Heart right ventricle (tissue), 16 donors: ENCODE measurements at regions of chr9 and their contacts with region 1.

Region 1: DNA sequence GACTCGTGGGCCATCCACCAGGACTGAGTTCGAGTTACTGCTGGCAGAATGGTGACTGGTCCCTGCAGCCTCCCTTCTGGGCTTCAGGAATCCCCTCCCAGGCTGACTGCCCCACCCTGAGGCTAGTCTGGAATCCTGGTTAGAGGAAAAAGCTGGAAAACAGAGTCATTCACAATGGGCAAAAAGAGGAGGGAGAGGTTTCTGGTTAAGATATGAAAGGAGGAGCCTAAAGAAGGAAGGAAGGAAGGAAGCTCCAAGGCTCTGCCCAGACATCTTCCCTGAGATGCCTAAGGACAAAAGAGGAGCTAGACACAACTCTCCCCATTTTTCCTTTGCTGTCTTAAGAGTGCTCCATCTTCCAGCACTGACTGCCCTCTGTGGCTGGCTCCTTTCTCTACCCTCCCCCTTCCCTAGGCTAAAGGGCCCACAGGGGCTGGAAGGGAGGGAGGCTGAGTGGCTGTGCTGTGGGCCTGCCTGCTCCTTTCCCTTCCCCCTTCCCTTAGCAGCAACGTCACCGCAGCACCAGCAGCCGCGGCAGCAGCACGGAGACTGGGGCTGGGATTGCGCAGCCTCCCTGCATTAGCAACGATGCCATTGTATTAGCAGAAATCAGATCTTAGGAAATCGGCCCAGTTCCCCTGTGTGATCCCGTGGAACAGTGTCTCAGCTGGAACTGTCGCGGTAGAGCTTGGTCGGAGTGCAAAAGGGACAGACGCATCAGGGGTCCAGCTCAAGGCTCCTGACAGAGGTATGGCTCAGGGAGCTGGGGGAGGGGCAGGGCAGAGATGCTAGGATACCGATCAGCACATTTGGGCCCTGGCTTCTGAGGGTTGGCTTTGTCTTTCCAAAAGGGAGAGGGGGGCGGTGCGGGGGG is 48.7 kb downstream of the RUSC2 start:
- DNase-seq: peak; percentile 76 to 78
- ATAC-seq: peak; percentile 83 to 92 (median 89)
- H3K4me3 ChIP-seq: peak overlapping the region; percentile 11 to 66 (median 50)
- H3K27ac ChIP-seq: peak overlapping the region; percentile 84 to 97 (median 89)
- H3K4me1 ChIP-seq: peaks cover 11 to 75% (median 53%) of the 10 kb centered on the region in 9 donors
- H3K27me3 ChIP-seq: no peaks in the 10 kb centered on the region
- CTCF ChIP-seq: no peak

Region 2: GRCh38 chr9:35510745-35511428 is 27.7 kb before region 1 on chr9:
- intact Hi-C with region 1: loop called in 3 of 10 experiments (anchors 2 to 5 kb)
- DNase-seq: peak; percentile 81 to 93
- ATAC-seq: peak; percentile 86 to 96 (median 95)
- H3K4me3 ChIP-seq: peak overlapping the region in 3 of 10 donors; percentile 2 to 32 (median 6)
- H3K27ac ChIP-seq: peak overlapping the region; percentile 68 to 91 (median 82)
- H3K4me1 ChIP-seq: peaks cover 3 to 78% (median 34%) of the 10 kb centered on the region in 9 donors
- H3K27me3 ChIP-seq: no peaks in the 10 kb centered on the region
- CTCF ChIP-seq: peak in 8 of 9 donors; percentile 17 to 68 (median 41)

Region 3: DNA sequence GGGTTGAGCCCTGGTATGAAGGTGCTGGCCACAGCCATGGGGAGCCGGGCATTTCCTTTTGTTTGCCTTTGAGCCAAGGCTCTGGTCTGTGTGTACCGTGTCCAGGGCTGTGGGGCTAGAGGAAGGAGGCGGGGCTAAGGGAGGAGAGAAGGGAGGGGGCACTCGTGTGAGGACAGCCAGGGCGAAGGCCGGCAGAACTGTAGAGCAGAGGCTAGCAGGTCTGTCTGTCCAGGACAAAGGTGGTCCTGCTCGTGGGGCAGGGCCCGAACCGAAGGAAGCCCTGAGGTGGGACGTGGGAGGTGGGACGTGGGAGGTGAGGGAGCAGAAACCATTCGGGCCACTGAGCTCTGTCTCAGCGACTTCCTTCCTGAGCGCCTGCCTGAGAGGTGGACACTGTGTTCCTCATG is 25.2 kb after region 1 on chr9:
- intact Hi-C with region 1: no loop called
- DNase-seq: peak; percentile 49 to 57
- ATAC-seq: peak; percentile 68 to 81 (median 72)
- H3K4me3 ChIP-seq: peak overlapping the region in 7 of 10 donors; percentile 7 to 39 (median 22)
- H3K27ac ChIP-seq: peak overlapping the region; percentile 13 to 70 (median 54)
- H3K4me1 ChIP-seq: peaks cover 13 to 43% (median 25%) of the 10 kb centered on the region in 9 donors
- H3K27me3 ChIP-seq: no peaks in the 10 kb centered on the region
- CTCF ChIP-seq: no peak